Panc1 (cell line): ENCODE measurements at regions of chr5 and their contacts with region 1.

Region 1: GRCh38 chr5:174990909-174991308 is 266.5 kb downstream of the MSX2 start:
- DNase-seq: no peak
- ATAC-seq: no peak
- H3K4me3 ChIP-seq: no peak overlapping the region
- H3K27ac ChIP-seq: no peak overlapping the region
- H3K4me1 ChIP-seq: no peaks in the 10 kb centered on the region
- H3K27me3 ChIP-seq: peaks cover 4% of the 10 kb centered on the region
- CTCF ChIP-seq: no peak

Region 2: GRCh38 chr5:174895363-174895762 is 95.5 kb before region 1 on chr5:
- CTCF ChIA-PET with region 1: interaction called, 13 read pairs
- POLR2A ChIA-PET with region 1: no interaction called
- in situ Hi-C with region 1: no loop called
- intact Hi-C with region 1: no loop called
- DNase-seq: no peak
- ATAC-seq: no peak
- H3K4me3 ChIP-seq: no peak overlapping the region
- H3K27ac ChIP-seq: no peak overlapping the region
- H3K4me1 ChIP-seq: no peaks in the 10 kb centered on the region
- H3K27me3 ChIP-seq: no peaks in the 10 kb centered on the region
- CTCF ChIP-seq: no peak; the same call in 1 of the 2 replicates

Region 3: DNA sequence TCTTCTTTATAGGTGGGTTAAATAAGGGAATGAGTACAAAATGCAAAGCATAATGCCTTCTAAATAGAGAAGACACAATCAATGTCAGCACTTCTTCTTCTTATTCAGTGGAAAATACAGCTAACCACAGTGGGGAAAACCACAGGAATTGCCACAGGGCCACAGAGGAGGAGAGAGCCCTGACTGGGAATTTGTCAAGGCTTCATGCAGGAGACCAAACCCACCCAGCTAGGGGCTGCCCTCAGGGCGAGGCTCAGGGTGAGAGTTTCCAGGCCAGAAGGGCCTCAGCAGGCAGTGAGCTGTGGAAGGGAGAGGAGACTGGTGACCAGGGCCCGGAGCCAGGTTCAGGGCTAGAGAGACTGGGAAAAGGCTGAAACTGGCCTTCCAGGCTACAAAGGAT is 12.6 kb after region 1 on chr5:
- CTCF ChIA-PET with region 1: no interaction called
- POLR2A ChIA-PET with region 1: no interaction called
- in situ Hi-C with region 1: no loop called
- intact Hi-C with region 1: no loop called
- DNase-seq: no peak
- ATAC-seq: no peak
- H3K4me3 ChIP-seq: no peak overlapping the region
- H3K27ac ChIP-seq: no peak overlapping the region
- H3K4me1 ChIP-seq: no peaks in the 10 kb centered on the region
- H3K27me3 ChIP-seq: no peaks in the 10 kb centered on the region
- CTCF ChIP-seq: no peak

Region 4: DNA sequence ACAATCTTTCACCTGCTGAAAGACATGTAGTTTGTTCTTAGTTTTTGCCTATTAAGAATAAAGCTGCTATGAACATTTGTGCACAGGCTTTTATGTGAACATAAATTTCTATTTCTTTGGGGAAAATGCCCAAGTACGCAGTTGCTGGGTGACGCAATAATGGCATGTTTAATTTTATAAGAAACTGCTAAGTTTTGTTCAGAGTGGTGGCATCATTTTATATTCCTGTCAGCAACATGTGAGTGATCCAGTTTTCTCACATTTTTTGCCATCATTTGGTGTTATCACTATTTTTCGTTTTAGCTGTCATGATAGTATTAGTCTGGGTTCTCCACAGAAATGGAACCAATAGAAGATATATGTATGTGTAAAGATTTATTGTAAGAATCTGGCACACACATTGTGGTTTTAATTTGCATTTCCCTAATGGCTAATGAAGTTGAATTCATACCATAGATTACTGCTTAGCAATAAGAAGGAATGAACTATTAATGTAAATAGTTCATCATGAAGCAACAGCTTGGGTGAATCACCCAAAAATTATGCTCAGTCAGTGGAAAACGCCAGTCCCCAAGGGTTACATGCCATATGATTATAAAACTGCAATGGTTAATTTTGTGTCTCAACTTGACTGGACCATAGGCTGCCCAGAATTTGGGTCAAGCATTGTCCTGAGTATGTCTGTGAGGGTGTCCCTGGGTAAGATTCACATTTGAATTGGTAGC is 92.1 kb after region 1 on chr5:
- CTCF ChIA-PET with region 1: no interaction called
- POLR2A ChIA-PET with region 1: no interaction called
- in situ Hi-C with region 1: no loop called
- intact Hi-C with region 1: no loop called
- DNase-seq: no peak
- ATAC-seq: no peak
- H3K4me3 ChIP-seq: no peak overlapping the region
- H3K27ac ChIP-seq: no peak overlapping the region
- H3K4me1 ChIP-seq: no peaks in the 10 kb centered on the region
- H3K27me3 ChIP-seq: no peaks in the 10 kb centered on the region
- CTCF ChIP-seq: no peak

Region 5: GRCh38 chr5:175393897-175394296 is 403.0 kb after region 1 on chr5:
- CTCF ChIA-PET with region 1: no interaction called
- POLR2A ChIA-PET with region 1: no interaction called
- in situ Hi-C with region 1: no loop called
- intact Hi-C with region 1: no loop called
- DNase-seq: no peak
- ATAC-seq: no peak
- H3K4me3 ChIP-seq: no peak overlapping the region
- H3K27ac ChIP-seq: no peak overlapping the region
- H3K4me1 ChIP-seq: no peaks in the 10 kb centered on the region
- H3K27me3 ChIP-seq: no peaks in the 10 kb centered on the region
- CTCF ChIP-seq: no peak